ENCODE measurements at regions of chr7 and their contacts with region 1.

Region 1: GRCh38 chr7:20330240-20330927 is at the start of gene ITGB8:
- DNase-seq: peak; percentile 92
- ATAC-seq: peak; percentile 84
- H3K4me3 Mint-ChIP-seq: peak within 1 kb of the TSS; percentile 73
- H3K27ac Mint-ChIP-seq: peak within 1 kb of the TSS; percentile 40
- H3K4me1 Mint-ChIP-seq: peaks cover 20% of the 10 kb centered on the region
- H3K27me3 Mint-ChIP-seq: peaks cover 50% of the 10 kb centered on the region
- total RNA-seq, gene ITGB8: 0.07 TPM in 1 of 2 experiments, not detected in the other

Region 2: DNA sequence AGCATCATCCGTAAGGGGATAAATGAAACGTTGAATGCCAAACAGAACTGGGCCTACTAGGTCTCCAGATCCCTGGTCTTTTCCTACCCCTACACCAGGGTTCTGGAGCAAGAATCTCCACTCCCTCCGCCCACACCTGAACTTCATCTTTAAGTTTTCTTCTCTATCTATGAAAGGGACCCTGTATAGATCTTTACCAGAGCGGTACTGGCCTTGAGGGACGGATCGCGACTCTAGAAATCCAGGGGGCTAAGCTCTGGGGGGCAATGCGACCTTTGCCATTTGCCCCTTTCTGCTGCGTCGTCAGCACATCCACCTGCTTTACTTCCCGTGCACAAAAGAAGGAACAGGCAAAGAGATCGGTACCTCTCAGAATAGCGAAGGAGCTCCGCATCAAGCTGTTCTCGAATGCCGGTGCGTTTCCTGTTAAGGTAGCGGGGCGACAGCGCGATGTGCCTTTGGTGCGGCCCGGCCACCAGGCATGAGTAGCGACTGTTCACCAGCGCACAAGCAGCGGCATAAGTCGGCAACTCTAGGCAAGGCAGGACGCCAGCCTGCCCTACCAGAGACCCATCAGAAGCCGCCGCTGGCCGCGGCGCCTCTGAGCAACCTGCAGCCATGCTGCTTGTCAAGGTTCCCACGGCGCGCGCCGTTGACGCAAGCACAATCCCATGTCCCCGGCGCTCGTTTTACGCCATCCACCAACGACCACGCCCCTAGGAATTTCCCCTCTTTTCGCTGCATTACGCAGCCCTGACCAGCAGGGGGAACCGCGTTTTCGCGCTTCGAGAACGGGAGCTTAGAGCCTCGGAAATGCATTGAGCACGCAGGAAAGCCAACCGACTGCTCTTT is 621.8 kb before region 1 on chr7 and contains the start of gene POLR1F:
- CTCF ChIA-PET with region 1: interaction called, 3 read pairs
- POLR2A ChIA-PET with region 1: interaction called, 3 read pairs
- intact Hi-C with region 1: loop called in 1 of 2 experiments (anchors 5 kb)
- DNase-seq: peak; percentile 96
- ATAC-seq: peak; percentile 96
- H3K4me3 Mint-ChIP-seq: peak within 1 kb of the TSS; percentile 89
- H3K27ac Mint-ChIP-seq: peak within 1 kb of the TSS; percentile 90
- H3K4me1 Mint-ChIP-seq: peaks cover 41% of the 10 kb centered on the region
- H3K27me3 Mint-ChIP-seq: no peaks in the 10 kb centered on the region
- total RNA-seq, gene POLR1F: 25.8 to 32.2 TPM

Region 3: GRCh38 chr7:20158684-20159083 is 171.7 kb before region 1 on chr7:
- CTCF ChIA-PET with region 1: no interaction called
- POLR2A ChIA-PET with region 1: no interaction called
- intact Hi-C with region 1: loop called in 1 of 2 experiments (anchors 5 kb)
- DNase-seq: no peak
- ATAC-seq: no peak
- H3K4me3 Mint-ChIP-seq: no peak overlapping the region
- H3K27ac Mint-ChIP-seq: no peak overlapping the region
- H3K4me1 Mint-ChIP-seq: no peaks in the 10 kb centered on the region
- H3K27me3 Mint-ChIP-seq: no peaks in the 10 kb centered on the region

Region 4: DNA sequence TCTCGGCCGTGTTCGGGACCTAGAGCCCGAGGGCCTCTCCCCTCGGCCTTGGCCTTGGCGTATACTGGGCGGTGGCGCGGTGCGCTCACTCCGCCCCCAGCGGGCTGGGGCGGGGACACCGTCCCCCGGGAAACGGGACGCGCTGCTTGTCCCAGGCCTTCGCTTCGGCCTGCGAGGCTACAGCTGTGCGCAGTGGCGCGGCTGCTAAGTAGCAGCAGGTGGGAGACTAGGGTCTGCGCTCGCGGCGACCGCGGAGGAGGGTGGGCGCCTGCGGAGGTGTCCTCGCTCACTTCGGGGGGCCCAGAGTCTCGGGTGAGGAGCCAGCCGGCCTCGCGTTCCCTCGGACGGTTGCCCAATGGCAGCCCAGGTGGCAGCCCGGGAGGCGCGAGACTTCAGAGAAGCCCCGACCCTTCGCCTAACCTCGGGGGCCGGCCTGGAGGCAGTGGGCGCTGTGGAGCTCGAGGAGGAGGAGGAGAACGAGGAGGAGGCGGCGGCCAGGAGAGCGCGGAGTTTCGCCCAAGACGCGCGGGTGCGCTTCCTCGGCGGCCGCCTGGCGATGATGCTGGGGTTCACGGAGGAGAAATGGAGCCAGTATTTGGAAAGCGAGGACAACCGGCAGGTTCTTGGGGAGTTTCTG is 1212.6 kb after region 1 on chr7 and contains the start of gene DNAH11:
- CTCF ChIA-PET with region 1: no interaction called
- POLR2A ChIA-PET with region 1: no interaction called
- intact Hi-C with region 1: loop called in 1 of 2 experiments (anchors 5 kb)
- DNase-seq: peak; percentile 61
- ATAC-seq: peak; percentile 94
- H3K4me3 Mint-ChIP-seq: peak within 1 kb of the TSS; percentile 76
- H3K27ac Mint-ChIP-seq: peak within 1 kb of the TSS; percentile 39
- H3K4me1 Mint-ChIP-seq: peaks cover 6% of the 10 kb centered on the region
- H3K27me3 Mint-ChIP-seq: peaks cover 50% of the 10 kb centered on the region
- total RNA-seq, gene DNAH11: 4.2 to 4.3 TPM

Measured in activated CD4-positive, alpha-beta T cell treated with anti-CD3 and anti-CD28 coated beads for 36 hours (primary cell).